ENCODE measurements at regions of chr4 and their contacts with region 1.

Region 1: GRCh38 chr4:25767877-25768725 is 94.7 kb downstream of the SEL1L3 start:
- DNase-seq: no peak
- ATAC-seq: no peak
- H3K4me3 ChIP-seq: no peak overlapping the region
- H3K4me3 Mint-ChIP-seq: no peak overlapping the region
- H3K27ac ChIP-seq: no peak overlapping the region
- H3K27ac Mint-ChIP-seq: no peak overlapping the region
- H3K4me1 ChIP-seq: no peaks in the 10 kb centered on the region
- H3K4me1 Mint-ChIP-seq: no peaks in the 10 kb centered on the region
- H3K27me3 ChIP-seq: no peaks in the 10 kb centered on the region
- H3K27me3 Mint-ChIP-seq: no peaks in the 10 kb centered on the region
- CTCF ChIP-seq: peak; percentile 13

Region 2: GRCh38 chr4:25439918-25440477 is 328.1 kb before region 1 on chr4:
- CTCF ChIA-PET with region 1: interaction called, 4 read pairs
- POLR2A ChIA-PET with region 1: no interaction called
- intact Hi-C with region 1: loop called (anchors 2 kb)
- DNase-seq: peak; percentile 62
- ATAC-seq: peak; percentile 47
- H3K4me3 ChIP-seq: no peak overlapping the region
- H3K4me3 Mint-ChIP-seq: no peak overlapping the region
- H3K27ac ChIP-seq: no peak overlapping the region
- H3K27ac Mint-ChIP-seq: no peak overlapping the region
- H3K4me1 ChIP-seq: no peaks in the 10 kb centered on the region
- H3K4me1 Mint-ChIP-seq: no peaks in the 10 kb centered on the region
- H3K27me3 ChIP-seq: peaks cover 0 to 3% (median 1%) of the 10 kb centered on the region in 4 experiments
- H3K27me3 Mint-ChIP-seq: no peaks in the 10 kb centered on the region
- CTCF ChIP-seq: peak; percentile 87

Region 3: DNA sequence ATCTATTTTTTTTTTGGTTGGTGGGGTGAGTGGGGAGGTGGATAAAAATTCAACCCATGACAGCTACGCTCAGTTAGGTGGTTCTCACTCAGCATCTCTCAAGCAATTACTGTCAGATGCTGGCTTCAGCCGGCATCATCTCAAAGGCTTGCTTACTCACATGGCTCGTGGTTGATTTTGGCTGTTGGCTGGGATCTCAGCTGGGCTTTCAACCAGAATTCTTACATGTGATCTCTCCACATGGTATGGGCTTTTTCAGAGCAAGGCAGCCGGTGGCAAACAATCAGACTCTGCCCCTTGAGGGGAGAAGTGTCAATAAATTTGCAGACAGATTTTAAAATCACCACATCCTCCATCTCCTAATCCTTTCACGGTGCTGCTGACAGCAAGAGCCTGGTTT is 65.3 kb before region 1 on chr4:
- CTCF ChIA-PET with region 1: no interaction called
- POLR2A ChIA-PET with region 1: no interaction called
- intact Hi-C with region 1: no loop called
- DNase-seq: no peak
- ATAC-seq: no peak
- H3K4me3 ChIP-seq: no peak overlapping the region
- H3K4me3 Mint-ChIP-seq: no peak overlapping the region
- H3K27ac ChIP-seq: no peak overlapping the region
- H3K27ac Mint-ChIP-seq: no peak overlapping the region
- H3K4me1 ChIP-seq: no peaks in the 10 kb centered on the region
- H3K4me1 Mint-ChIP-seq: no peaks in the 10 kb centered on the region
- H3K27me3 ChIP-seq: no peaks in the 10 kb centered on the region
- H3K27me3 Mint-ChIP-seq: no peaks in the 10 kb centered on the region
- CTCF ChIP-seq: no peak

Region 4: DNA sequence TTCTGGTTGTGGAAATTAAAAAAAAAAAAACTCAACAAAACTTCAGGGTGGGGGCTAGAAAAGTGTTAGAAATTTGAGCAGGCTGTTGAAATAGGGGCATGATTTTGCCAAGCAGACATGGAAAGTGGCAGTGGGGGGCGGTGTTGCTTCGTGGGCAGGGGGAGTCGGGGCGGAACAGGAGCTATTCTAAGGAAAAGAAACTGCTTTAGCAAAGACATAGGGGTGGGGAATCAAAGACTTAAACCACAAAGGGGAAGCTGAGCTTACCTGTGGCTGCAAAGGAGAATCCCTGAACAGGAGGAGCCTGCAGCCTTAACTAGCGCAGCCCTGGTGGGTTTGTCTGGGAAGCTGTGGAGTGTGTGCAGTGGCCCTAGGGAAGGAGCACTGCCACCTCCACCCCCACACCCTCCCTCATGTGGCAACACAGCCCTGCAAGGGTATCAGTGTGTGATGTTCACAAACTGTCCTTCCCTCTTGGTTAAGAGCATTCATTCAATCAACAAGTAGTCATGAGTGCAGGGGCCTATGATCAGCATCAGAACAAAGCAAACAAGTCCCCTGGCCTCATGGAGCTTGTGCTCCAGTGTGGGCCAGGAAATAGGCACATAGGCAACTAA is 74.2 kb after region 1 on chr4:
- CTCF ChIA-PET with region 1: no interaction called
- POLR2A ChIA-PET with region 1: no interaction called
- intact Hi-C with region 1: no loop called
- DNase-seq: peak; percentile 85
- ATAC-seq: peak; percentile 90
- H3K4me3 ChIP-seq: peak overlapping the region in 1 of 5 experiments; percentile 12
- H3K4me3 Mint-ChIP-seq: peak overlapping the region; percentile 38
- H3K27ac ChIP-seq: peak overlapping the region; percentile 13 to 61
- H3K27ac Mint-ChIP-seq: peak overlapping the region; percentile 57
- H3K4me1 ChIP-seq: peaks cover 30 to 53% of the 10 kb centered on the region in 2 donors
- H3K4me1 Mint-ChIP-seq: peaks cover 77% of the 10 kb centered on the region
- H3K27me3 ChIP-seq: no peaks in the 10 kb centered on the region
- H3K27me3 Mint-ChIP-seq: no peaks in the 10 kb centered on the region
- CTCF ChIP-seq: peak; percentile 73

Region 5: GRCh38 chr4:26197018-26197779 is 429.1 kb after region 1 on chr4:
- CTCF ChIA-PET with region 1: no interaction called
- POLR2A ChIA-PET with region 1: no interaction called
- intact Hi-C with region 1: no loop called
- DNase-seq: no peak
- ATAC-seq: peak; percentile 43
- H3K4me3 ChIP-seq: no peak overlapping the region
- H3K4me3 Mint-ChIP-seq: no peak overlapping the region
- H3K27ac ChIP-seq: no peak overlapping the region
- H3K27ac Mint-ChIP-seq: no peak overlapping the region
- H3K4me1 ChIP-seq: peaks cover 0 to 7% of the 10 kb centered on the region in 2 donors
- H3K4me1 Mint-ChIP-seq: peaks cover 8% of the 10 kb centered on the region
- H3K27me3 ChIP-seq: no peaks in the 10 kb centered on the region
- H3K27me3 Mint-ChIP-seq: peaks cover 16% of the 10 kb centered on the region
- CTCF ChIP-seq: no peak

Measured in B cell (primary cell).